Body of pancreas (tissue), 4 donors: ENCODE measurements at regions of chrX and their contacts with region 1.

Region 1: DNA sequence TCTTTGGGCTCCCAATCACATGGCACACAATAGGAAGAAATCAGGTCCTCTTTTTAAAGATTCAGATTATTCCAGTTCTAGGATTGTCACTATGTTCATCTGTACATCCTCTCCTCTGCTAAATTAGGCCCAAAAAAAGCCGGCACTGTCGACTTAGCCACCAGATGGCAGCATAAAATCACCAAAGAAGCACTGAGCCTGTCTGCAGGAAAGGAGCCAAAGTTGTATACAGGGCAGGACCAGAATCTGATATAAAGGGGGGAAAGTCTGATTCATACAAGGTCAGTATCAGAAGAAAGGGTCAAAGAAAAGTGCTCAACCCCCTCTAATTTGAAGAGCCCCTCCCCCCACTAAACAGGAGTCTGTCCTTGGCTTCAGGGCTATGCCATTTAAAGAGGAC is 292.5 kb downstream of the CHIC1 start:
- DNase-seq: peak; percentile 47 to 80 (median 62)
- ATAC-seq: no peak
- H3K4me3 ChIP-seq: no peak overlapping the region
- H3K27ac ChIP-seq: no peak overlapping the region
- H3K4me1 ChIP-seq: no peaks in the 10 kb centered on the region
- H3K27me3 ChIP-seq: no peaks in the 10 kb centered on the region
- CTCF ChIP-seq: peak; percentile 34 to 82 (median 64)
- POLR2A ChIP-seq: no peak

Region 2: GRCh38 chrX:74015379-74016019 is 160.0 kb after region 1 on chrX:
- intact Hi-C with region 1: loop called (anchors 10 kb)
- DNase-seq: peak; percentile 55 to 80 (median 68)
- ATAC-seq: peak; percentile 63
- H3K4me3 ChIP-seq: no peak overlapping the region
- H3K27ac ChIP-seq: no peak overlapping the region
- H3K4me1 ChIP-seq: no peaks in the 10 kb centered on the region
- H3K27me3 ChIP-seq: no peaks in the 10 kb centered on the region
- CTCF ChIP-seq: peak; percentile 55 to 88 (median 67)
- POLR2A ChIP-seq: no peak

Region 3: DNA sequence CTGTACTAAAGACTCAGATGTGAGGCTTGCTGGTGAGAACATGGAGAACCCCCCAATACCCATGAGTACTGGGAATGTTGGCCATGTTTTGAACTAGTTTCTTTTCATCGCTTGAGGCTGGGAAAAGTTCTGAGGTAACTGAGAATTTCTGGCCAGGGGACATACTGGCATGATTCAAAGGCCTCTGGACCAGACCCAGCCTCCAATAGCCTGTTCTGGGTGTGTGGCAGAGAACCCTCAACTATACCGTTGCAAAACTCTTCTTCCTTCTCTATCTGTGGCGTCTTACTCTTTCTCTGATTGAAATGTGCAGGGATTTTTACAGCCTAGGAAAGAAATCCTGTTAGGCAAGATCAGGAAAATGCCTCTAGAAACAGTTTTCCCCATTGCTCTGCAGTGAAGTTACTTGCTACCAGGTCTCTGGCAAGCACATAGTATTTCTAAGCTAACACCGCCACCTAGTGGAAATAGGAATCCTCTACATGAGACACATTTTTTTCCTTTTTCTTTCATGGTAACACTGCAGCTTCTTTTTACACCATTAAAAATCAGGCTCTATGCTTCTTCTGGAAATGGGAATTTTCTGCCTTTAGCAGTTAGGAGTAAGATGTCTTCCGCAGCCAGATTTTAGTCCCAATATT is 277.7 kb after region 1 on chrX:
- intact Hi-C with region 1: loop called (anchors 5 kb)
- DNase-seq: peak in 1 of 4 donors; percentile 8
- ATAC-seq: peak; percentile 45
- H3K4me3 ChIP-seq: no peak overlapping the region
- H3K27ac ChIP-seq: no peak overlapping the region
- H3K4me1 ChIP-seq: no peaks in the 10 kb centered on the region
- H3K27me3 ChIP-seq: no peaks in the 10 kb centered on the region
- CTCF ChIP-seq: peak; percentile 43 to 85 (median 56)
- POLR2A ChIP-seq: no peak

Region 4: GRCh38 chrX:74343343-74344279 is 488.1 kb after region 1 on chrX:
- intact Hi-C with region 1: loop called (anchors 10 kb)
- DNase-seq: peak; percentile 42 to 71 (median 66)
- ATAC-seq: peak; percentile 68
- H3K4me3 ChIP-seq: no peak overlapping the region
- H3K27ac ChIP-seq: no peak overlapping the region
- H3K4me1 ChIP-seq: no peaks in the 10 kb centered on the region
- H3K27me3 ChIP-seq: no peaks in the 10 kb centered on the region
- CTCF ChIP-seq: peak; percentile 29 to 65 (median 46)
- POLR2A ChIP-seq: no peak